ENCODE measurements at regions of chr12 and their contacts with region 1.

Region 1: DNA sequence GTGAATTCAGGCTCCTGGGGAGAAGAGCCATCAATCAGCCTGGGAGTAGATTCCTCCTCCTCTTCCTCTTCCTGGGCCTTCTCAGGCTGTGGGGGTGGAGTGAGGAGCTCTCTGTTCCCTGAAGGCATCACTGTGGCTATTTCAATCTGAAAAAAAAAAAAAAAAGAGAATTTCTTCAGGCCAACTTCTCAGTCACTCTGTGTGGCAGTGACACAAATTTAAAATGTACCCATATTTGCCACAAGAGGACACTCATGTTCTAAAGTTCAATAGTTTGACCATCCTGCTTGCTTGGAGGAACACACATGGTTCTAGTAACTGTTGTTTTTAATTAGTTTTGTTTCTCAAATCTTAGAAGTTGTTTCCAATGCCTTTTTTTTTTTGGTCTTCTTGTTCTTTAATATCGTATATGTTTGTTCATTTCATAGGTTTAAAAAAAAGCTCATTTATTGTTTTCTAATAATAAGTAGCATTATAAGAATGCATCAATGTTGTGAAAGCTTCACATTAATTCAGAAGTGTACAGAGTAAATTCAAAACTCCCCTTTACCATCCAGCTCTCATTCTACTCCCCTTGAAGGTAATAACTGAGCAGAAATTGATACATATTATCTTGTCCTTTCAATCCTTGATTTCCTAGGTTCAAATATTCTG is 23.3 kb upstream of the CCER1 start:
- DNase-seq: peak; percentile 79
- ATAC-seq: peak; percentile 80
- H3K4me3 ChIP-seq: no peak overlapping the region
- H3K27ac ChIP-seq: peak overlapping the region; percentile 77; the same call in 1 of the 2 replicates
- H3K4me1 ChIP-seq: peaks cover 12% of the 10 kb centered on the region
- H3K27me3 ChIP-seq: no peaks in the 10 kb centered on the region
- CTCF ChIP-seq: peak; percentile 89
- POLR2A ChIP-seq: 0 out of 2 replicates have a peak, but pooled peaks have one; percentile 36
- RAD21 ChIP-seq: peak; percentile 91

Region 2: DNA sequence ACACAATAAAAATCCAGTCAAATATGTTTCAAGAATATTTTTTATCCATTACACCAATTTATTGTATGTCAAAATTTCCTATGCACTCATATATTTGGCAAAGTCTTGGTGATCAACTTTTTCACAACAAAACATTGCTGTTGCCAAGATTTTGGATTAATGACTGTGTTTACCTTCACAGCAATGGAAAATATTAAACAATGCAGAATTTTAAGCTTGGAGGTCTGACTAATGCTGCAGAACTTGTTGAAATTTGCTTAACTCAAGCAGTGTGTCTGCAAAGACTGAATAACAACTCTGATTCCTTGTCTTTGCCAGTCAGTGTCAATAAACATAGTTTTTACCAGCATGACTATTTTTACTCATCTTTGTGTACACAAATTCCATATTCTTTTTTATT is 359.7 kb before region 1 on chr12:
- CTCF ChIA-PET with region 1: no interaction called
- POLR2A ChIA-PET with region 1: no interaction called
- dilution Hi-C with region 1: no loop called
- in situ Hi-C with region 1: no loop called
- intact Hi-C with region 1: no loop called
- DNase-seq: peak; percentile 16
- ATAC-seq: peak; percentile 52
- H3K4me3 ChIP-seq: no peak overlapping the region
- H3K27ac ChIP-seq: no peak overlapping the region
- H3K4me1 ChIP-seq: peaks cover 6% of the 10 kb centered on the region
- H3K27me3 ChIP-seq: no peaks in the 10 kb centered on the region
- CTCF ChIP-seq: no peak
- POLR2A ChIP-seq: no peak
- RAD21 ChIP-seq: no peak

Region 3: DNA sequence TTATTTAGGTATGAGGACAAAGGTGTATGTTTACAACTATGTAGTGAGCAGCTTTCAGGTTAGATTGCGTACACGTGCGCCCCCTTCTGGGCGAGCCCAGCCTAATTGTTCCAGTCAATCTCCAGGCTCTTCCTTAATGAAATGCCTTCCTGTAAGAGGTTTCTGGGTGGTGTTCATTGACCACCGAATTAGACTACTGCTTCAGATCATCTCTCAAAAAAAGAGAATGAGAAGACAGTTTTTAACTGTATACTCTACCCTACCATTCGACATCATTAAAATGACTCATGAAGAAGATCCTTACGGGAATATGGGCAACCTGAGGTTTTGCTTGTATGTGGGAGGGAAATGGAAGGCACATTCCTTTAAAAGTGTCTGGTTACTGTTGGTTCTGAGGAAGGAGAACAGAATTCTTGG is 130.9 kb after region 1 on chr12:
- CTCF ChIA-PET with region 1: interaction called, 7 read pairs
- POLR2A ChIA-PET with region 1: interaction called, 5 read pairs
- dilution Hi-C with region 1: no loop called
- in situ Hi-C with region 1: no loop called
- intact Hi-C with region 1: loop called (anchors 1 kb)
- DNase-seq: peak; percentile 80
- ATAC-seq: peak; percentile 78
- H3K4me3 ChIP-seq: peak overlapping the region; percentile 39; the same call in 1 of the 2 replicates
- H3K27ac ChIP-seq: no peak overlapping the region
- H3K4me1 ChIP-seq: peaks cover 2% of the 10 kb centered on the region; the same call in 1 of the 2 replicates
- H3K27me3 ChIP-seq: no peaks in the 10 kb centered on the region
- CTCF ChIP-seq: peak; percentile 57
- POLR2A ChIP-seq: no peak
- RAD21 ChIP-seq: peak; percentile 35

Region 4: DNA sequence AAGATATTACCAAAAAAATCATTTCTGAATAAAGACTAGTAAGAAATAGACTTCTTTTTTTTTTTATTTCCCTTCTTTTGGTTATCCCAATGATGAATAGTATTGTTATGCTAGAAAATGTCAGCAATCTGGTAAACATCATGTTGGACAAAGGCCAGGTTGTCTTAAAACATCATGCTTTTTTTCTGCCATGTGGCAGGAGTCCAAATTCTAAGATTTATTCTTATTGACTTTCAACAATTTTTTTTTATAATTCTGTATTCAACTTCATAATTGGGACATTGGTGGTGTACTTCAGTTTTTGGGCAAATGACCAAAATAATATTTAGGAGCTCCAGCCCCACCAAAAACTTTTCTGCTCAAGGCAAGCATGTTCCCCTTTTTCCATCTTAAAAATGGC is 193.9 kb after region 1 on chr12:
- CTCF ChIA-PET with region 1: no interaction called
- POLR2A ChIA-PET with region 1: no interaction called
- dilution Hi-C with region 1: no loop called
- in situ Hi-C with region 1: no loop called
- intact Hi-C with region 1: loop called (anchors 1 kb)
- DNase-seq: no peak
- ATAC-seq: no peak
- H3K4me3 ChIP-seq: no peak overlapping the region
- H3K27ac ChIP-seq: peak overlapping the region; percentile 49; the same call in 1 of the 2 replicates
- H3K4me1 ChIP-seq: peaks cover 8% of the 10 kb centered on the region
- H3K27me3 ChIP-seq: no peaks in the 10 kb centered on the region
- CTCF ChIP-seq: no peak
- POLR2A ChIP-seq: no peak
- RAD21 ChIP-seq: no peak

Region 5: GRCh38 chr12:91326058-91327027 is 348.1 kb after region 1 on chr12:
- CTCF ChIA-PET with region 1: interaction called, 12 read pairs
- POLR2A ChIA-PET with region 1: interaction called, 3 read pairs
- dilution Hi-C with region 1: loop called (anchors 25 kb)
- in situ Hi-C with region 1: no loop called
- intact Hi-C with region 1: loop called (anchors 2 kb)
- DNase-seq: peak; percentile 75
- ATAC-seq: peak; percentile 70
- H3K4me3 ChIP-seq: no peak overlapping the region
- H3K27ac ChIP-seq: peak overlapping the region; percentile 87; the same call in 1 of the 2 replicates
- H3K4me1 ChIP-seq: peaks cover 7% of the 10 kb centered on the region
- H3K27me3 ChIP-seq: no peaks in the 10 kb centered on the region
- CTCF ChIP-seq: peak; percentile 84
- POLR2A ChIP-seq: no peak
- RAD21 ChIP-seq: peak; percentile 72

Region 6: GRCh38 chr12:91355150-91356006 is 377.1 kb after region 1 on chr12:
- CTCF ChIA-PET with region 1: interaction called, 5 read pairs
- POLR2A ChIA-PET with region 1: no interaction called
- dilution Hi-C with region 1: no loop called
- in situ Hi-C with region 1: loop called (anchors 5 kb)
- intact Hi-C with region 1: loop called (anchors 1 kb)
- DNase-seq: peak; percentile 80
- ATAC-seq: peak; percentile 99
- H3K4me3 ChIP-seq: no peak overlapping the region
- H3K27ac ChIP-seq: no peak overlapping the region
- H3K4me1 ChIP-seq: no peaks in the 10 kb centered on the region
- H3K27me3 ChIP-seq: no peaks in the 10 kb centered on the region
- CTCF ChIP-seq: peak; percentile 96
- POLR2A ChIP-seq: no peak
- RAD21 ChIP-seq: peak; percentile 98

Measured in IMR-90 (cell line).